HCT116 (cell line): ENCODE measurements at regions of chr3 and their contacts with region 1.

Region 1: GRCh38 chr3:109224333-109224732 is 87.8 kb downstream of the C3orf85 start:
- DNase-seq: peak; percentile 6
- ATAC-seq: peak; percentile 89
- H3K4me3 ChIP-seq: no peak overlapping the region
- H3K27ac ChIP-seq: no peak overlapping the region
- H3K4me1 ChIP-seq: no peaks in the 10 kb centered on the region
- H3K27me3 ChIP-seq: no peaks in the 10 kb centered on the region
- CTCF ChIP-seq: peak; percentile 36 to 88 (median 82); a peak in 5 of 6 replicates
- POLR2A ChIP-seq: no peak
- RAD21 ChIP-seq: peak; percentile 62

Region 2: DNA sequence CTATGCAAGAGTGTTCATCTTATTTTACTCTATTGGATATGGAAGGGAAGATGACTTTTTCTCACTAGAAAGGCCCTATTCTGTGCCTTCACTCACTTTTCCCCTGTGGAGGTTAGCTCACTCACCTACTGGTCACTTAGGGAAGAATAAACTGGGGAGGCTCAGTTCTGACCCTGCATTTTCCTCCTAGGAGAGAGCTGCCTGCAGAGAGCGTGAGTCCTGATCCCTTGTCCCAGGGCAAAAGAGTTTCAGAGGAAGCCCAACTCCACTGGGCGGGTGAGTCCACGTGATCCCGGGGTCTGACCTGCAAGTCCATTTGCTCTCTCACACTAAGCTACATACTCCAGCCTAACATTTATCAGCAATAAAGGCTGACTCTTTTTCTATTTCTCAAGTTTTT is 114.8 kb before region 1 on chr3:
- CTCF ChIA-PET with region 1: no interaction called
- POLR2A ChIA-PET with region 1: no interaction called
- RAD21 ChIA-PET with region 1: no interaction called
- intact Hi-C with region 1: no loop called
- DNase-seq: no peak
- ATAC-seq: peak; percentile 42; the same call in 1 of the 2 replicates
- H3K4me3 ChIP-seq: no peak overlapping the region
- H3K27ac ChIP-seq: no peak overlapping the region
- H3K4me1 ChIP-seq: no peaks in the 10 kb centered on the region
- H3K27me3 ChIP-seq: no peaks in the 10 kb centered on the region
- CTCF ChIP-seq: no peak
- POLR2A ChIP-seq: no peak
- RAD21 ChIP-seq: no peak

Region 3: DNA sequence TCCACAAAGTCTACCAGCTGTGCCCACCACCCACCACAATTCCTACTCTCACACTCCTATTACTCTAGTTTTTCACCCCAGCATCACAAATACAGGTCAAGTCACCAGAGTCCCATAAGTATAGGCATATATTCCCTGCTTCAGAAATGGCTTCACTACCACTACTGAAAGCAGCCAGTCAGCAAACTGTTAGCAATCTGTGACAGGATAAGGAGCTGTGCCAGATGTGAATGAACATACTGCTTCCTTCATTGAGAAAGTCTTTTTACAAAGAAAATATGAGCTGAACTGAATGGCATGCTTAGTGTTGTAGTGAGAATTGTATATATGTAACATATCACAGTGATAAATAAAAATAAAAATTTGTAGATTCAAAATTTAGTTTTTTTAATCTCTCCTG is 11.0 kb before region 1 on chr3:
- CTCF ChIA-PET with region 1: interaction called, 12 read pairs
- POLR2A ChIA-PET with region 1: no interaction called
- RAD21 ChIA-PET with region 1: no interaction called
- intact Hi-C with region 1: no loop called
- DNase-seq: no peak
- ATAC-seq: no peak
- H3K4me3 ChIP-seq: no peak overlapping the region
- H3K27ac ChIP-seq: no peak overlapping the region
- H3K4me1 ChIP-seq: no peaks in the 10 kb centered on the region
- H3K27me3 ChIP-seq: 0 out of 2 replicates have a peak, but pooled peaks cover 2% of the 10 kb centered on the region
- CTCF ChIP-seq: no peak
- POLR2A ChIP-seq: no peak
- RAD21 ChIP-seq: no peak